CD4-positive, alpha-beta memory T cell (primary cell): ENCODE measurements at regions of chr4 and their contacts with region 1.

Region 1: GRCh38 chr4:153573881-153574802 is 108.0 kb downstream of the TMEM131L start:
- DNase-seq: peak; percentile 59 to 74 (median 64)
- H3K4me3 ChIP-seq: no peak overlapping the region
- H3K4me3 Mint-ChIP-seq: peak overlapping the region in 3 of 8 donors; percentile 40 to 64 (median 47)
- H3K27ac ChIP-seq: peak overlapping the region; percentile 1
- H3K27ac Mint-ChIP-seq: peak overlapping the region in 6 of 7 donors; percentile 16 to 86 (median 68)
- H3K4me1 ChIP-seq: peaks cover 31% of the 10 kb centered on the region
- H3K4me1 Mint-ChIP-seq: peaks cover 50 to 74% (median 59%) of the 10 kb centered on the region in 4 donors
- H3K27me3 ChIP-seq: no peaks in the 10 kb centered on the region
- H3K27me3 Mint-ChIP-seq: no peaks in the 10 kb centered on the region

Region 2: GRCh38 chr4:153166716-153167501 is 407.2 kb before region 1 on chr4:
- CTCF ChIA-PET with region 1: no interaction called
- POLR2A ChIA-PET with region 1: no interaction called
- intact Hi-C with region 1: no loop called
- DNase-seq: no peak
- H3K4me3 ChIP-seq: no peak overlapping the region
- H3K4me3 Mint-ChIP-seq: no peak overlapping the region
- H3K27ac ChIP-seq: no peak overlapping the region
- H3K27ac Mint-ChIP-seq: no peak overlapping the region
- H3K4me1 ChIP-seq: no peaks in the 10 kb centered on the region
- H3K4me1 Mint-ChIP-seq: no peaks in the 10 kb centered on the region
- H3K27me3 ChIP-seq: peaks cover 4% of the 10 kb centered on the region
- H3K27me3 Mint-ChIP-seq: peaks cover 7 to 8% of the 10 kb centered on the region in 2 donors

Region 3: GRCh38 chr4:153426207-153426885 is 147.8 kb before region 1 on chr4:
- CTCF ChIA-PET with region 1: interaction called, 228 read pairs
- POLR2A ChIA-PET with region 1: interaction called, 32 read pairs
- intact Hi-C with region 1: loop called (anchors 1 kb)
- DNase-seq: peak; percentile 52 to 72 (median 65)
- H3K4me3 ChIP-seq: no peak overlapping the region
- H3K4me3 Mint-ChIP-seq: peak overlapping the region in 7 of 8 donors; percentile 13 to 74 (median 65)
- H3K27ac ChIP-seq: no peak overlapping the region
- H3K27ac Mint-ChIP-seq: peak overlapping the region; percentile 83 to 94 (median 90)
- H3K4me1 ChIP-seq: peaks cover 64% of the 10 kb centered on the region
- H3K4me1 Mint-ChIP-seq: peaks cover 29 to 51% (median 41%) of the 10 kb centered on the region in 4 donors
- H3K27me3 ChIP-seq: no peaks in the 10 kb centered on the region
- H3K27me3 Mint-ChIP-seq: no peaks in the 10 kb centered on the region

Region 4: DNA sequence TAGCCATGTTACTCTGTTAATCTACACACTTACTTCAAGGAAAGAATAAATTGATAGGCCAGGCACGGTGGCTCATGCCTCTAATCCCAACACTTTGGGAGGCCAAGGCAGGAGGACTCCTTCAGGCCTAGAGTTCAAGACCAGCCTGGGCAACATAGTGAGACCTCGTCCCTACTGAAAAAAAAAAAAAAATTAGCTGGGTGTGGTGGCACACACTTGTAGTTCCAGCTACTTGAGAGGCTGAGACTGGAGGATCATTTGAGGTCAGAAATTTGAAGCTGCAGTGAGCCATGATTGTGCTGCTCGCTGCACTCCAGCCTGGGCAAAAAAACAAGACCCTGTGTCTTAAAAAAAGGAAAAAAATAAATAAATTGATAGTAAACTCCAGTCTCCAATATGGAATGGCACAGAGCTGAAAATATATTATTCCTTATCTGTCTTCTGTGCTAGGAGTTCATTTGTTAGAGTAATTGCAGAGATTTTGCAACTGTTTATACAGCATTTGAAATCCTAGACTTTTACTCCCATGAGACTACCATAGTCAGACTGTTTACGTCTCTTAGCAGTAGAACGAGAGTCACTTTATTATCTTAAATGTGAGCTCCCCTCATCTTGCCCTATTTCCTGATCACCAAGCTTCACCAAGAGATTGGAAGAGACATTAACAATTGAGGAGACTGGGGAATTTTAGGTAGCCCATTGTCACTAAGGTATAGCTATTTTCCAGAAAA is 126.8 kb before region 1 on chr4:
- CTCF ChIA-PET with region 1: interaction called, 10 read pairs
- POLR2A ChIA-PET with region 1: no interaction called
- intact Hi-C with region 1: no loop called
- DNase-seq: no peak
- H3K4me3 ChIP-seq: no peak overlapping the region
- H3K4me3 Mint-ChIP-seq: no peak overlapping the region
- H3K27ac ChIP-seq: no peak overlapping the region
- H3K27ac Mint-ChIP-seq: no peak overlapping the region
- H3K4me1 ChIP-seq: peaks cover 18% of the 10 kb centered on the region
- H3K4me1 Mint-ChIP-seq: peaks cover 12 to 23% (median 15%) of the 10 kb centered on the region in 4 donors
- H3K27me3 ChIP-seq: no peaks in the 10 kb centered on the region
- H3K27me3 Mint-ChIP-seq: no peaks in the 10 kb centered on the region

Region 5: GRCh38 chr4:153497988-153498967 is 75.9 kb before region 1 on chr4:
- CTCF ChIA-PET with region 1: interaction called, 21 read pairs
- POLR2A ChIA-PET with region 1: interaction called, 5 read pairs
- intact Hi-C with region 1: no loop called
- DNase-seq: no peak
- H3K4me3 ChIP-seq: peak overlapping the region in 1 of 2 donors; percentile 38
- H3K4me3 Mint-ChIP-seq: peak overlapping the region; percentile 57 to 85 (median 80)
- H3K27ac ChIP-seq: peak overlapping the region; percentile 64
- H3K27ac Mint-ChIP-seq: peak overlapping the region; percentile 94 to 99 (median 97)
- H3K4me1 ChIP-seq: peaks cover 98% of the 10 kb centered on the region
- H3K4me1 Mint-ChIP-seq: peaks cover 76 to 100% (median 86%) of the 10 kb centered on the region in 4 donors
- H3K27me3 ChIP-seq: no peaks in the 10 kb centered on the region
- H3K27me3 Mint-ChIP-seq: no peaks in the 10 kb centered on the region

Region 6: DNA sequence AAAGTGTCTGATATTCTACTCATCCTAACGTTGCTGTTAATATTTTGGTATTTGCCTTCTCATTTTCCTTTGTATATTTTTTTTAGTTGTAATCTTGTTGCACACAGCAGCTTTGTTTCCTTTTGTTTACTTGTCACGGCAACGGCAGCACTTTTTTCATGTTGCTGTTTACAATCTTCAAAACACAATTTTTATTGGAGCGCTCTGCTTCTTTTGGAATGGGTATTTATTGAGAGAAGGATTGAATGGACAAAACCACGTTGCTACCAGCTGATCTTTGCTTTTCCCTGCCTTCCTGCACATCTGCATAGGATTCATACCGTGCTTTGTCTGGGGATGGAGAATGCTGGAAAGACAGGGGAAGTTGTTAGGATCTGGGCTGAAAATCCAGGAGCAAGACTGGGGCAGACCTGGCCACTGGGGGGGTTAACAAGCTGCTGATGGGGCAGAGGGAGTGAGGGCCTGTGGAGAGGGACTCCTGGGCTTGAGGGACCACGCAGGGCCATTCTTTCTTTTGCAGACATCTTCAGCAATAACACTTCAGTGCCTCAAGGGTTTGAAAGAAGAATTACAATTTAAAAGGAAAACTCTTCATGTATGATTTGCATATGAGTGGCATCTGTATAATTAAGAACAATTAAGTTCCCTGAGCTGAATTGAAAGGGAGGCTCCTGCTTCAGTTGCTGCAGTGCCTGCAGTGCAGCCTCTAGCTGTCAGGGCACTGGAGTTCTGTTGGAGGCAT is 38.2 kb before region 1 on chr4:
- CTCF ChIA-PET with region 1: interaction called, 19 read pairs
- POLR2A ChIA-PET with region 1: no interaction called
- intact Hi-C with region 1: loop called (anchors 5 kb)
- DNase-seq: peak in 4 of 5 donors; percentile 26 to 51 (median 33)
- H3K4me3 ChIP-seq: no peak overlapping the region
- H3K4me3 Mint-ChIP-seq: peak overlapping the region; percentile 48 to 90 (median 76)
- H3K27ac ChIP-seq: peak overlapping the region; percentile 23
- H3K27ac Mint-ChIP-seq: peak overlapping the region; percentile 90 to 96 (median 94)
- H3K4me1 ChIP-seq: peaks cover 96% of the 10 kb centered on the region
- H3K4me1 Mint-ChIP-seq: peaks cover 59 to 93% (median 80%) of the 10 kb centered on the region in 4 donors
- H3K27me3 ChIP-seq: no peaks in the 10 kb centered on the region
- H3K27me3 Mint-ChIP-seq: no peaks in the 10 kb centered on the region

Region 7: GRCh38 chr4:153585026-153585425 is 10.9 kb after region 1 on chr4:
- CTCF ChIA-PET with region 1: interaction called, 26 read pairs
- POLR2A ChIA-PET with region 1: no interaction called
- intact Hi-C with region 1: no loop called
- DNase-seq: no peak
- H3K4me3 ChIP-seq: no peak overlapping the region
- H3K4me3 Mint-ChIP-seq: no peak overlapping the region
- H3K27ac ChIP-seq: no peak overlapping the region
- H3K27ac Mint-ChIP-seq: peak overlapping the region in 4 of 7 donors; percentile 18 to 90 (median 40)
- H3K4me1 ChIP-seq: no peaks in the 10 kb centered on the region
- H3K4me1 Mint-ChIP-seq: peaks cover 5 to 16% (median 12%) of the 10 kb centered on the region in 4 donors
- H3K27me3 ChIP-seq: no peaks in the 10 kb centered on the region
- H3K27me3 Mint-ChIP-seq: no peaks in the 10 kb centered on the region